Spleen (tissue), 13 donors: ENCODE measurements at regions of chr12 and their contacts with region 1.

Region 1: DNA sequence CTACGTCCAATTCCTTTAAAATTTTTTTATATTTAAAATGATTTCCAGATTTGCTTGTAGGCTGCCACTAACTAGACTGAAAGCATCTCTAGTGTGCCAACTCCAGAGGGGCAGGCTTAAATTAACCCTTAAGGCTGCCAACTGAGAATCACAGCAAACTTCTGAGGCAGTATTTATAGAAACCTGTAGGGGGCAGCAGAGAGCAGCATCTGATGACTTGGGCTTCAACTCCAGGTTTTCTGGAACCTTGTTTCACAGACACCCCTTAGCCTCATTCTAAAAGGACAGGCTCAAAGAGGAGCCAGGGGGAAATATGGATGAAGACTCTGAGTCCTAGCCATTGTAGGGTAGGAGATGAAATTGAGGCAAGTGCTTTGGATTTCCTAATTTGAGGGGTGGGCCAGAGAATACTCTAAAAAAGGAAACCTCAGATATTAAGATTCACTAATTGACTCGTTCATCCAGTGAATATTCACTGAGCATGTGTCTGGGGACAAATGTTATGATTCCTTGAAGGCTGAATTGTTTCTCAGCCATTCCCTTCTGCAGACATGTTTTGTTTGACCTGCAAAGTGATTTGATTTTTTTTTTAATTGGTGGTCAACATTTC is 63.3 kb upstream of the HSPB8 start:
- DNase-seq: no peak
- H3K4me3 ChIP-seq: no peak overlapping the region
- H3K27ac ChIP-seq: no peak overlapping the region
- H3K4me1 ChIP-seq: no peaks in the 10 kb centered on the region
- H3K27me3 ChIP-seq: peaks cover 0 to 26% (median 0%) of the 10 kb centered on the region in 7 donors
- CTCF ChIP-seq: peak; percentile 27 to 77 (median 66)
- POLR2A ChIP-seq: no peak

Region 2: DNA sequence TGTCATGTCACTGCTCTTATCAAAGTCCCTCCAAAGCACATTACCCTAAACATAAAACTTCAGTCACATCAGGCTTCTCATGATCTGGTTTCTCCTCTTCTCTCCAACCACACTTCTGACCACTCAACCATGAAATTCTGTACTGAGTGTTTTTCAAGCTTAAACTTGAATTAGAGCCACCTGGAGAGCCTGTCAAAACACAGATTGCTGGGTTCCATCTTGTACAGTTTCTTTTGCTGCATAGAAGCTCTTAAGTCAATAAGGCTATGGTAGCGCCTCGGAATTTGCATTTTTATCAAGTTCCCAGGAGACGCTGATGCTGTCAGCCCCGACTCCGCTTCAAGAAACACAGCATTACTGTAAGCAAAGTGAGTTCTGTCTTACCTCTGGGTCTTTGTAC is 150.4 kb before region 1 on chr12:
- intact Hi-C with region 1: no loop called
- DNase-seq: no peak
- H3K4me3 ChIP-seq: no peak overlapping the region
- H3K27ac ChIP-seq: no peak overlapping the region
- H3K4me1 ChIP-seq: no peaks in the 10 kb centered on the region
- H3K27me3 ChIP-seq: peaks cover 0 to 7% (median 0%) of the 10 kb centered on the region in 7 donors
- CTCF ChIP-seq: no peak
- POLR2A ChIP-seq: no peak

Region 3: DNA sequence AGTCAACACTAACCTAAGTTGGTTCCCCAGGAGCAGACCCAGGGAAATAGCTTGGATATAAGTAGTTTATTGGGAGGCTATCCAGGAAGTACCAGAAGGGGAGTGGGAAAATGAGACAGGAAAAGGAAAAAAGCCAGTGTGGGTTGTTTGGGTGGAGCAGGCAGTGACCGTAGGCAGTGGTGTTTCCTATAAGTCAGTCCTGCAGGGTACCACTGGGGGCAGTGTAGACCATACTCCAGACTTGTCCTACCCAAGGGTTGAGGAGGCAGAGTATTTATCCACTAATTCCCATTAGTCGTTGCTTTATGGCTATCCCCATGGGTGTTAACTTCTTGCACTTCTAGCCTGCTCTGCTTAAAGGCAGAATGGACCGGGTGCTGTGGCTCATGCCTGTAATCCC is 212.7 kb after region 1 on chr12:
- intact Hi-C with region 1: no loop called
- DNase-seq: no peak
- H3K4me3 ChIP-seq: no peak overlapping the region
- H3K27ac ChIP-seq: no peak overlapping the region
- H3K4me1 ChIP-seq: no peaks in the 10 kb centered on the region
- H3K27me3 ChIP-seq: no peaks in the 10 kb centered on the region
- CTCF ChIP-seq: peak in 3 of 11 experiments; percentile 14 to 29 (median 19)
- POLR2A ChIP-seq: no peak

Region 4: GRCh38 chr12:119412811-119413794 is 297.7 kb after region 1 on chr12:
- intact Hi-C with region 1: loop called (anchors 5 kb)
- DNase-seq: no peak
- H3K4me3 ChIP-seq: peak overlapping the region in 2 of 8 donors; percentile 26 to 49
- H3K27ac ChIP-seq: no peak overlapping the region
- H3K4me1 ChIP-seq: peaks cover 0 to 15% (median 3%) of the 10 kb centered on the region in 6 donors
- H3K27me3 ChIP-seq: peaks cover 0 to 40% (median 0%) of the 10 kb centered on the region in 7 donors
- CTCF ChIP-seq: peak; percentile 52 to 82 (median 74)
- POLR2A ChIP-seq: no peak